ENCODE measurements at regions of chr16 and their contacts with region 1.

Region 1: DNA sequence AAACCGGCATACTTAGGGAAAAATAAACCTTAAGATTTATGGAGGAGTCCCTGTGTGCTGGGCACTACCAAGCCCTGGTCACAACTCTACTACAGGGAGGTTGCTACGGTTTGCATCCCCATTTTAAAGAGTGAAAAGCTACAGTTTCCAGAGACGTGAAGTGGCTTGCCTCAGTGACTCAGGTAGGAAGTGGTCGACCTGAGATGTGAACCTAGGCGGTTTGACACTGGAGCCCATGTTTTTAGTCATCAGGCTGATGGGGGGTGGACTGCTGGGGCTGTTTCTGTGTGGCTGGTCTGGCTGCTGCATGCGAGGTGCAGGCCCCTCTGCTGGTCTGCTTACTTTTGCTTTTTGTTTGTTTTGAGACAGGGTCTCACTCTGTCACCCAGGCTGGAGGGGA is 6.6 kb downstream of the COX6A2 start:
- DNase-seq: peak; percentile 63
- H3K4me3 Mint-ChIP-seq: peak overlapping the region; percentile 55
- H3K27ac Mint-ChIP-seq: peak overlapping the region; percentile 77
- H3K4me1 Mint-ChIP-seq: peaks cover 54% of the 10 kb centered on the region
- H3K27me3 Mint-ChIP-seq: no peaks in the 10 kb centered on the region

Region 2: DNA sequence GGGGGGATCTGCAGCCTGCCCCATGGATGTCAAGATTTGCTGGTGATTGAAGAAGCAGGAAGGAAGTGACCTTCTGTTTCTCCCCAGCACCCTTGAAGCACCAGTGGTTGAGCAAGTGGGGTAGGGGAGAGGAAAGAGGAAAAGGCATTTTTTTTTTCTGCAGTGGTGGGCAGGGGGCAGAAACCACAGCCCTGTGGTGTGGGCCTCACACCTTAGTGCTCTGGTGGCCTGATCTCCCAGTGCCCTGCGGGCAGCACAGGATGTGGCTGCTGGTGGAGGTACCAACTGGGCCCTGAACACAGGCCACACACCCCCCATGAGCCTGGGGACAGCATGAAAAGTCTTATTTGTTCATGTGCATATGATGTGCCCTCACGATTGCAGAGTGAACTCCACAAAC is 21.4 kb before region 1 on chr16:
- intact Hi-C with region 1: loop called (anchors 2 kb)
- DNase-seq: peak; percentile 22
- H3K4me3 Mint-ChIP-seq: no peak overlapping the region
- H3K27ac Mint-ChIP-seq: peak overlapping the region; percentile 47
- H3K4me1 Mint-ChIP-seq: peaks cover 33% of the 10 kb centered on the region
- H3K27me3 Mint-ChIP-seq: no peaks in the 10 kb centered on the region

Region 3: DNA sequence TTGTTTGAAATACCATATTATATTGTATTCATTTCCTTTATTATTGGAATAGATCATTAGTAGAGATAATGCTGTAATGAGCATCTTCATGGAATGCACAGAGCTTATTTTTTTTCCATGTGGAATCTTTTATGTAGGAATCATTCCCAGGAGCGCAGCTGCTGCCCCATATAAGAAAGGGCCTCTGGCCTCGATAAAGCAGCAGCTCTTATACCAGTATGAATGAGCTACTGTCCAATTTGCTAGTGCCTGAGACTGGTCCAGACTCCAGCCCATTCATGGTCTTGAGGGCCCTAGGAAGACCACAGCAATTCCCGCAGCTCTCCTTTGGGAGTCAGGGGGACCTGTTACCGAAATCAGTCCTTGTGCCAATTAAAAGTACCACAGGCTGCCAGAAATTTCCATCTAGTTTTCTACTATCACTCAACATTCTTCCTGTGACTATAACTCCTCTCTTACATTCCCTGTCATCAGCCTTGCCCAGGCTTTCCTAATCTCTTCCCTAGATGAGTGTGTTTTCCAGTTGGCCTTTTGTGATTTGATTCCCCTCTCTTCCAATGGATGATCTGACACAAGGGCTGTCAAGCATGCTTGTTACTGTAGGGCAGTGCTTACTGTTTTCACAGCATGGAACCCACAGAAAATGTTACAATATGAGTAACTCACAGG is 19.1 kb after region 1 on chr16:
- intact Hi-C with region 1: loop called (anchors 2 kb)
- DNase-seq: no peak
- H3K4me3 Mint-ChIP-seq: no peak overlapping the region
- H3K27ac Mint-ChIP-seq: no peak overlapping the region
- H3K4me1 Mint-ChIP-seq: peaks cover 25% of the 10 kb centered on the region
- H3K27me3 Mint-ChIP-seq: no peaks in the 10 kb centered on the region

Region 4: GRCh38 chr16:31507617-31507928 is 86.0 kb after region 1 on chr16:
- intact Hi-C with region 1: no loop called
- DNase-seq: no peak
- H3K4me3 Mint-ChIP-seq: peak overlapping the region; percentile 94
- H3K27ac Mint-ChIP-seq: peak overlapping the region; percentile 87
- H3K4me1 Mint-ChIP-seq: peaks cover 30% of the 10 kb centered on the region
- H3K27me3 Mint-ChIP-seq: no peaks in the 10 kb centered on the region

Measured in activated T-helper 2 cell treated with anti-CD3 and anti-CD28 coated beads, Interferon-gamma antibody, Interleukin-2, Interleukin-4, amounts not matched to agents 10 μg/mL and 5 μg/mL and 100 μg/mL, durations not matched to agents 14 hours and 24 hours and 36 hours (primary cell).